GM18951 (cell line): ENCODE measurements at regions of chr2 and their contacts with region 1.

Region 1: DNA sequence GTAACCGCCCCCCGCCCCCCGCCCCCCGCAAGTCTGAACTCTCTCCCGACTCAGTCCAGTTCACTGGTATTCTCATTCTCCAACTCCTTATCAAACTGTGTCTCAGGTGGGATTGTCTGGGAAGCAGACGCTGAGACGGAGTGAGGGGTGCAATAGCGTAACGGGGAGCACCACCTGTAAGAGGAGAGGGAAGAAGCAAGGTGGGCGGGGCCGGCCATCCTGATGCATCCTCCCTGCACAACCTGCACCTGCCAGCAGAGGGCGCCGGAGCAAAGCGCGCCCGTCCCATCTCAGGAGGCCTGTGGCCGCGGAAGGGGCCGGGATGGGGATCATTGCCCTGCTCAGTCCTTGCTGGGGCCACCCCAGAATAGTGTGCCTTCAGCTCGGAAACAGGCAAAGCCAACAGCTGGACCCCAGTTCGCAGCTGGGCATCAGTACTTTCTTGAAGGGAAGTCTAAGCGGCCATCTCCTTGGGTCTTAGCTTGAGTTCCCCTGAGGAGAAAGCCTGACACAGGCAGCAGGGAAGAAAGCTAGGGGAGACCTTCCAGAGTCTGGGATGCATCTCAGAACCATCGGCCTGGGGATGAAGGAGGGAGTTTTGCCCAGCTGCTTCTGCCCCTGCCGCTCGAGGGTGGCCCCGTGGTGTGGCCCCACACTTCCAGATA is 208.0 kb downstream of the TFCP2L1 start:
- POLR2A ChIP-seq: no peak

Region 2: DNA sequence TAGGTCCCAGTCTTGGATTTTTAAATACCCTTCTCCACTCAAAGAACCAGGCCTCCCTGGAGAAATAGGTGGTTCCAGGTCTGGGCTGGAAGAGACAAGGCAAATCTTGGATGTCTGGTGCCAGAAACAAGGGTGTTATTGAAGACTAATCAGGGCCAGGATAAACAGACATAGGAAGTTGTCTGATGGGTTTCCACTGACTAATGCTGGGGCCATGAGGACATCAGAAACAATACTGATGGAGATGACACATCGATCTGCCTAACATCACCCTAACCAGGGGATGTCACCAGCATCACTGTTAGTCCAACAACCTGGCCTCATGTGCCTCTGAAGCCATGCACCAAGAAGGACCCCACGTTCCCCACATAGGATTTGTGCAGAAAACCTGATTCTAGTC is 383.9 kb before region 1 on chr2:
- in situ Hi-C with region 1: loop called (anchors 10 kb)
- POLR2A ChIP-seq: no peak

Region 3: DNA sequence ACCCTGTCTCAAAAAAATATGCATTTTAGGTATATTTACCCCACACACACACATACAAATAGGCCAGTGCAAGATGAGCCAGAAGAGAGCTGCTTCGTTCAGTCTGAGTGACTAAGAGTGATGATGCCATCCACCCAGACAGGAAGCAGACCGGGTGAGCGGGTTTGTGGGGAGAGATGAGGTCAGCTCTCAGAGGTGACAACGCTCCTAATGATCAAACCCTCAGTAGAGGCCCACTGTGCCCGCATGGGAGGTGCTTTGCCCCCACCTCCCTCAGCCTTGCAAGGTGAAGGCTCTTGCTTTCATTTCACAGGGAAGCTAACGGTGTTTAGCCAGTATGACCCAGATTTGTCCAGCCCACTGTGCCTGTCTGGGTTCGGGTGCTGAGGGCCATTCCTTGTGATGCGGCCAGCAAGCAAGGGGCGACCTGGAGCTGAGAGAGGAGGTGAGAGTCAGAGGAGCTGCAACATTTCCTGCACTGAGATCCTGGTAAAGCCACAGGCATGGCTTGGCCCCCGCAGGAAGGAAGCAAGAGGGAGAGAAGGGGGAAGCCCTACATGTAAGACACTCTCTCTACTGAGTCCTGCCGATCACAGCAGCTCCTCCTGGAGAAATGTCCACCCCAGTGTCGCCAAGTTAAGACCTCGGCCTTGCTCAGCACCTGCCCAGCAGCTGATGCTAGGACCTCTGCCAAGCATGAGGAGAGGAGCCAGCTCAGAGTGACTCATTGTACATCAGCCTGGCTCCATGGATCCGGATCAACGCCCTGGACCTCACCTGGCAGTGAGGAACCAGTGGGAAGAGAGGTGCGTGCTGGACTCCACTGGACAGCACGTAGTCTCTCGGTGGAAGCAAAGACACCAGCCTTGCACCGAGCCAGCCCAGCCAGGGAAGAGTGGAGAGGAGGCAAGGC is 622.7 kb after region 1 on chr2:
- in situ Hi-C with region 1: loop called (anchors 25 kb)
- POLR2A ChIP-seq: no peak

Region 4: GRCh38 chr2:121868652-121869051 is 791.6 kb after region 1 on chr2:
- in situ Hi-C with region 1: no loop called
- POLR2A ChIP-seq: no peak

Region 5: GRCh38 chr2:122748552-122749011 is 1671.6 kb after region 1 on chr2:
- in situ Hi-C with region 1: no loop called
- POLR2A ChIP-seq: no peak